ENCODE measurements at regions of chr3 and their contacts with region 1.

Region 1: DNA sequence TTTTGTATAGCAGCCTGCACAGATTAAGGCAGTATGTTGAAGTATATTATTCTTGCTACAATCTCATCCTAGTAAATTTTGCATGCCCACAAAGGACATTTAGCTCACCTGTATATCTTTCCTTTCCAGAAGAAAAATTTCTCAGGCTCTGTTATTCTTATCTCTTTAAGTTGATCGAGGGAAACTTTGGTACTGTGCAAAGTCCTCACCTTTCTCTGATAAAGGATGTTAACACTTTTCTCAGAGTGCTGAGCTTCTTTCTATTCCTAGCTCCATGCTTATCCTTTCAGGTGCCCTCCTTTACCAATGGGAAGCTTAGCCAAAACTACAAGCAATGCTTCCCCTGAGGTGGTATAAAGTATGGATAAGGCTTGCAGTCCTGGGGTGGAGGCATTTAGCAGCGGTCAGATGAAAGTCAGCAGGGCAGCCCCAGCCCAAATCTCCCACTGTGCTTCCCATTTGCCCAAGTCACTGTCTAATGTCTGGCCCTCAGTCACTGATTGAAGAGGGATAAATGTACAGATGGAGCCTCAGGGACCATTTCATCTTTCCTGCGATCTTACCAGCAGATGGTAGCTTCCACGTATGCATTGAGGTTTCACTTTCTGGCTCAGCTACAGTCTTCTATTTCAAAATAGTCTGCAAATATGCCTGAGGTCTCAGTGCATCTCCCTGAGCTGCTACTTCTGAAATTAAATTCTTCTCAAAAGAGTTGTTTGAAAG is 127.8 kb upstream of the P2RY1 start:
- DNase-seq: no peak
- ATAC-seq: no peak
- H3K4me3 ChIP-seq: no peak overlapping the region
- H3K27ac ChIP-seq: no peak overlapping the region
- H3K4me1 ChIP-seq: no peaks in the 10 kb centered on the region
- H3K27me3 ChIP-seq: no peaks in the 10 kb centered on the region
- CTCF ChIP-seq: no peak
- POLR2A ChIP-seq: no peak

Region 2: GRCh38 chr3:152302521-152303021 is 404.6 kb before region 1 on chr3:
- intact Hi-C with region 1: no loop called
- DNase-seq: peak in 4 of 5 donors; percentile 67 to 84 (median 73)
- ATAC-seq: peak; percentile 70 to 81 (median 76)
- H3K4me3 ChIP-seq: peak overlapping the region in 10 of 12 donors; percentile 1 to 59 (median 48)
- H3K27ac ChIP-seq: peak overlapping the region; percentile 66 to 91 (median 82)
- H3K4me1 ChIP-seq: peaks cover 7 to 100% (median 70%) of the 10 kb centered on the region in 12 donors
- H3K27me3 ChIP-seq: no peaks in the 10 kb centered on the region
- CTCF ChIP-seq: no peak
- POLR2A ChIP-seq: no peak

Region 3: DNA sequence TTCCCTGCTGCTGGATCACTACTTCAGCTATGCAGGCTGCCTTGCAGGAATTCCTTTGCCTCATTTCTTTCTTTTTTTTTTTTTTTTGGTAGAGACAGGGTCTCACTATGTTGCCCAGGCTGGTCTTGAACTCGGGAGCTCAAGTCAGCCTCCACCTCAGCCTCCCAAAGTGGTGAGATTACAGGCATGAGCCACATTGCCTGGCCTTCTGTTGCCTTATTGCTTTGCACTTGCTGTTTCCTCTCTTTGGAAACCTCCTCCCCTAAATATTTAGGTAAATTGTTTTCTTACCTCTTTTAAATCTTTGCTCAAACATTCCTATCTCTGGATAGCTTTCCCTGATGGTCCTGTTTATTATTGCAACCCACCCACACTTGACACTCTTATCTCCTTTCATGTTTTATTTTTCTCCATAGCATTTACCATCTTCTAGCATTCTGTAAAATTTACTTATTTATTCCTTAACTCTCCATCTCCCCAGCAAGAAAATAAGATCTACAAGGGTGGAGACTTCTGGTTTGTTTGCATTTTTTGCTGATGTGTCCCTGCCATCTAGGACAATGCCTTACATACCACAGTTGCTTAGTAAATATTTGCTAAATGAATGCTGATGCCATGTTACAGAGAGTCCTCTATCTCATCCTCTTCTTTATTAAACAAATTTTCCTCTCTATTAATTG is 262.5 kb after region 1 on chr3:
- intact Hi-C with region 1: loop called in 1 of 10 experiments (anchors 10 kb)
- DNase-seq: no peak
- ATAC-seq: no peak
- H3K4me3 ChIP-seq: no peak overlapping the region
- H3K27ac ChIP-seq: no peak overlapping the region
- H3K4me1 ChIP-seq: peaks cover 0 to 9% (median 0%) of the 10 kb centered on the region in 12 donors
- H3K27me3 ChIP-seq: no peaks in the 10 kb centered on the region
- CTCF ChIP-seq: no peak
- POLR2A ChIP-seq: no peak